Colonic mucosa (tissue), 4 donors: ENCODE measurements at regions of chr21 and their contacts with region 1.

Region 1: GRCh38 chr21:31604591-31605190 is 54.8 kb upstream of the SOD1 start:
- DNase-seq: peak; percentile 53
- H3K4me3 ChIP-seq: no peak overlapping the region
- H3K27ac ChIP-seq: no peak overlapping the region
- H3K4me1 ChIP-seq: no peaks in the 10 kb centered on the region
- H3K27me3 ChIP-seq: no peaks in the 10 kb centered on the region
- CTCF ChIP-seq: peak; percentile 89

Region 2: GRCh38 chr21:31098576-31099005 is 506.1 kb before region 1 on chr21:
- intact Hi-C with region 1: loop called (anchors 5 kb)
- DNase-seq: peak; percentile 61
- H3K4me3 ChIP-seq: no peak overlapping the region
- H3K27ac ChIP-seq: no peak overlapping the region
- H3K4me1 ChIP-seq: no peaks in the 10 kb centered on the region
- H3K27me3 ChIP-seq: no peaks in the 10 kb centered on the region
- CTCF ChIP-seq: peak; percentile 74

Region 3: DNA sequence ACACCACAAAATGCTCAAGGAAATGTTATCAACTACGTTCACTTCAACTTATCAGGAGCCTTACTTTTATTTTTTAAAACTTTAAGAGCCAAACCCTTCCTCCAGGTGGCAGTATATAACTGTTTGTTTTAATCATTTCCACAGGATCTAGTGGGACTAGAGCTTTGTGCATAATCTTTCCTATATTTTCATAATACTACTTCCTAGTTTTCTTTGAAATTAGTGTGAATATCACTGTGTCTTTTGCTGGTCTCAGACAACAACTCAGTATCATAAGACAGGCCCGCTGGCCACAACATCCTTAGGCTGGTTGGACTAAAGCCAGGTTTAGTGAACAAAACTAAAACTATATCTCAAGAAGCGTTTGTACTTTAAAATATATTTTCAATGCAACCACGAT is 406.1 kb before region 1 on chr21:
- intact Hi-C with region 1: loop called (anchors 5 kb)
- DNase-seq: no peak
- H3K4me3 ChIP-seq: no peak overlapping the region
- H3K27ac ChIP-seq: no peak overlapping the region
- H3K4me1 ChIP-seq: no peaks in the 10 kb centered on the region
- H3K27me3 ChIP-seq: no peaks in the 10 kb centered on the region
- CTCF ChIP-seq: peak; percentile 40

Region 4: GRCh38 chr21:32712043-32712442 is 1107.4 kb after region 1 on chr21:
- intact Hi-C with region 1: no loop called
- DNase-seq: no peak
- H3K4me3 ChIP-seq: no peak overlapping the region
- H3K27ac ChIP-seq: no peak overlapping the region
- H3K4me1 ChIP-seq: no peaks in the 10 kb centered on the region
- H3K27me3 ChIP-seq: no peaks in the 10 kb centered on the region
- CTCF ChIP-seq: no peak